ENCODE measurements at regions of chr12 and their contacts with region 1.

Region 1: GRCh38 chr12:4855121-4855924 is 54.4 kb upstream of the KCNA1 start:
- DNase-seq: no peak
- H3K4me3 ChIP-seq: no peak overlapping the region
- H3K27ac ChIP-seq: no peak overlapping the region
- H3K4me1 ChIP-seq: peaks cover 14 to 34% (median 26%) of the 10 kb centered on the region in 4 donors
- H3K27me3 ChIP-seq: no peaks in the 10 kb centered on the region
- CTCF ChIP-seq: peak; percentile 77 to 88 (median 80)
- EP300 ChIP-seq: no peak
- POLR2A ChIP-seq: no peak

Region 2: GRCh38 chr12:5003020-5003666 is 147.8 kb after region 1 on chr12:
- intact Hi-C with region 1: loop called (anchors 1 kb)
- DNase-seq: no peak
- H3K4me3 ChIP-seq: no peak overlapping the region
- H3K27ac ChIP-seq: no peak overlapping the region
- H3K4me1 ChIP-seq: peaks cover 3 to 8% (median 4%) of the 10 kb centered on the region in 4 donors
- H3K27me3 ChIP-seq: no peaks in the 10 kb centered on the region
- CTCF ChIP-seq: peak; percentile 90 to 98 (median 90)
- EP300 ChIP-seq: no peak
- POLR2A ChIP-seq: no peak

Region 3: GRCh38 chr12:5083955-5084849 is 228.9 kb after region 1 on chr12:
- intact Hi-C with region 1: loop called (anchors 2 kb)
- DNase-seq: no peak
- H3K4me3 ChIP-seq: no peak overlapping the region
- H3K27ac ChIP-seq: no peak overlapping the region
- H3K4me1 ChIP-seq: peaks cover 0 to 1% (median under 1%) of the 10 kb centered on the region in 4 donors
- H3K27me3 ChIP-seq: peaks cover 0 to 12% (median 0%) of the 10 kb centered on the region in 4 donors
- CTCF ChIP-seq: peak; percentile 61 to 72 (median 67)
- EP300 ChIP-seq: no peak
- POLR2A ChIP-seq: no peak

Region 4: GRCh38 chr12:5184186-5184585 is 328.9 kb after region 1 on chr12:
- intact Hi-C with region 1: no loop called
- DNase-seq: no peak
- H3K4me3 ChIP-seq: no peak overlapping the region
- H3K27ac ChIP-seq: no peak overlapping the region
- H3K4me1 ChIP-seq: peaks cover 0 to 6% (median 0%) of the 10 kb centered on the region in 4 donors
- H3K27me3 ChIP-seq: peaks cover 0 to 23% (median 0%) of the 10 kb centered on the region in 4 donors
- CTCF ChIP-seq: no peak
- EP300 ChIP-seq: no peak
- POLR2A ChIP-seq: no peak